ENCODE measurements at regions of chr6 and their contacts with region 1.

Region 1: DNA sequence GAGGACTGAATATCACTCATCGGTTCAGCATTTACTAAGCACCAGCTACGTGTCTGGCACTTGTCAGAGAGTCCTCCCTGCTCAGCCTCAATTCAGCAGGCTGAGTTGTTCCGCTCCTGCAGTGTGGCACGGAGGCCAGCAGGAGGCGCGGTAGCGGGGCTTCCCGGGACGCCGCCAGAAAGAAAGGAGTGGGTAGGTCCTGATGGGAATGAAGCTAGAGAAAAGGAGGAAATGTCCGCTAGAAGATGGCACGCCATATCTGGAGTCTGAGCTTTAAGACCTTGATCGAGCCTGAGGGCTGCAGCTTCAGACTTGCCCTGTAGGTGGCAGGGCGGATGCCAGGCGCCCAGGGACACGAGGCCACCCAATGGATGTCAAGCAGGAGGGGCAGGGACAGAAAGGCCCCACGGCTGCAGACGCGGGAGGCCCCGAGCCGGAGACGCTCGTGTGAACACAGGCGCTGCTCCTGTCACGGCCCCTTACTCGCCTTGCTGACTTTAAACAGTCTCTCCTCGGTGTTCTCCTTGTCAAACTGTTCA is 18.7 kb downstream of the SERPINB6 start:
- DNase-seq: no peak
- H3K4me3 Mint-ChIP-seq: no peak overlapping the region
- H3K27ac Mint-ChIP-seq: no peak overlapping the region
- H3K4me1 Mint-ChIP-seq: peaks cover 5% of the 10 kb centered on the region
- H3K27me3 Mint-ChIP-seq: peaks cover 9% of the 10 kb centered on the region

Region 2: GRCh38 chr6:2476361-2476760 is 476.3 kb before region 1 on chr6:
- CTCF ChIA-PET with region 1: no interaction called
- DNase-seq: no peak
- H3K4me3 Mint-ChIP-seq: no peak overlapping the region
- H3K27ac Mint-ChIP-seq: no peak overlapping the region
- H3K4me1 Mint-ChIP-seq: no peaks in the 10 kb centered on the region
- H3K27me3 Mint-ChIP-seq: peaks cover 13% of the 10 kb centered on the region

Region 3: DNA sequence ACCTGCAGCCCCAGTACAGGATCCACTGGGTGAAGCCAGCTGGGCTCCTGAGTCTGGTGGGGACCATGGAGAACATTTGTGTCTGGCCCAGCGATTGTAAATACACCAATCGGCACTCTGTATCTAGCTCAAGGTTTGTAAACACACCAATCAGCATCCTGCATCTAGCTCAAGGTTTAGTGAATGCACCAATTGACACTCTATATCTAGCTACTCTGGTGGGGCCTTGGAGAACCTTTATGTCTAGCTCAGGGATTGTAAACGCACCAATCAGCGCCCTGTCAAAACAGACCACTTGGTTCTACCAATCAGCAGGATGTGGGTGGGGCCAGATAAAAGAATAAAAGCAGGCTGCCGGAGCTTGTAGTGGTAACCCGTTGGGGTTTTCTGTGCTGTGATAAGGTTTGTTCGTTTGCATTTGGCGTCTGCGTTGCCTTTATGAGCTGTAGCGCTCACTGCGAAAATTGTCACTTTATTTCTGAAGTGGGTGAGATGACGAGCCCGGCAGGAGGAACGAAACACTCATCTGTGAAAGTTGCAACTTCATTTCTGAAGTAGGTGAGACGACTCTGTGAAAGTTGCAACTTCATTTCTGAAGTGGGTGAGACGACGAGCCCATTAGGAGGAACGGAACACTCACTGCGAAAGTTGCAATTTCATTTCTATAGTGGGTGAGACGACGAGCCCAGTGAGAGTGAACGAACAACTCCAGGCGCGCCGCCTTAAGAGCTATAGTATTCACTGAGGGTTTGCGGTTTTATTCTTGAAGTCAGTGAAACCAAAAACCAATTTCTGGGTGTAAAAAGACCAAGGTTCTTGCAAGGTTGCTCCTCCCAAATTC is 12.4 kb before region 1 on chr6:
- CTCF ChIA-PET with region 1: interaction called, 15 read pairs
- DNase-seq: peak; percentile 85
- H3K4me3 Mint-ChIP-seq: peak overlapping the region; percentile 67
- H3K27ac Mint-ChIP-seq: peak overlapping the region; percentile 95
- H3K4me1 Mint-ChIP-seq: peaks cover 69% of the 10 kb centered on the region
- H3K27me3 Mint-ChIP-seq: peaks cover 8% of the 10 kb centered on the region

Region 4: DNA sequence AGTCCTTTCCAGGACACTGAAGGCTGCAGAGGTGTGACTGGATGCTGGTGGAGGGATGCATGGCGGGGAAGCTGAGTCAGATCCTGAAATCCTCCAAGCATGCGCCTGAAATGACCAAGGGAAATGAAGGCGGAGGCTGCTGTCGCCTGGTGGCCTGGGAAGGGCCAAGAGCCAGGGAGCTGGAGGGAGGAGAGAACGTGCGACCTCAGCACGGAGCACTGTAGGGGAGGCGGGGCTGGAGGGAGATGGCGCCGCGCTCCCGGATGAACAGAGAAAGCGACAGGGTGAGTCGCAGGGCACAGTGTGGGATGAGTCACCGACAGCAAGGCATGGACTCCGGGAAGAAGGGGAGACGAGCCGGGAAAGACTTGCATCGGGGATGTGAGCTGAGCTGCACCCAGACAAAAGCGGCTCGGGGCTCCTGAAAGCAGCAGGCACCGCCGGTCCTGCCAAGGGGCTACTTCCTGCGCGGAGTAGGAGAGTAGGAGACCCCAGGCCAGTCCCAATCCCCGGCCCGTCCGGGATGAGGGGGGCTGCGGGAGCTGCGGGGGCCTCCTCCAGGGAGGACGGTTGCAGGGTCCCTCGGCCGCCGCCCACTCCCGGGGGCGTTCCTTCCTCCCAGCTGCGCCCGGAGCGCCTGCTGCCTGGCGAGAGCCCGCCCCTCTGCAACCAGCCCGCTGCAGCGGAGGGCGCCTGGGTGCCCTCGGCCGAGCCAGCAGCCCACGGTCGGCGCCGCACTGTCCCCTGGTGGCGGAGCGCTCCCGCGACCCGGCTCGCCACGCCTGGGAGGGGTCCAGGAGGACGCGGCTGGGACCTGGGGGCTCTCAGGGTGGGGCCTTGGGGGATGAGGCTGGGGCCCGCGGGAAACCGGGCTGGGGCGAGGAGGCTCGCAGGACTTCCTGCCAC is 36.1 kb after region 1 on chr6:
- CTCF ChIA-PET with region 1: interaction called, 11 read pairs
- DNase-seq: peak; percentile 84
- H3K4me3 Mint-ChIP-seq: peak overlapping the region; percentile 90
- H3K27ac Mint-ChIP-seq: peak overlapping the region; percentile 98
- H3K4me1 Mint-ChIP-seq: peaks cover 32% of the 10 kb centered on the region
- H3K27me3 Mint-ChIP-seq: peaks cover 16% of the 10 kb centered on the region

Measured in activated naive CD4-positive, alpha-beta T cell treated with anti-CD3 and anti-CD28 coated beads, Interleukin-2, amount 10 ng/mL, durations not matched to agents 7 days and 5 days (primary cell).